Activated B cell treated with CpG ODN at 0.5 μM for 24 hours (primary cell): ENCODE measurements at regions of chr13 and their contacts with region 1.

Region 1: GRCh38 chr13:113296842-113297369 is at the start of gene LAMP1:
- DNase-seq: peak; percentile 100
- ATAC-seq: peak; percentile 80
- H3K4me3 Mint-ChIP-seq: peak within 1 kb of the TSS; percentile 94
- H3K27ac Mint-ChIP-seq: peak within 1 kb of the TSS; percentile 98
- H3K4me1 Mint-ChIP-seq: peaks cover 45% of the 10 kb centered on the region
- H3K27me3 Mint-ChIP-seq: peaks cover 16% of the 10 kb centered on the region
- CTCF ChIP-seq: no peak
- total RNA-seq, gene LAMP1: 83.7 and 86.2 TPM in 2 replicates

Region 2: GRCh38 chr13:112587212-112587763 is 709.6 kb before region 1 on chr13:
- CTCF ChIA-PET with region 1: no interaction called
- POLR2A ChIA-PET with region 1: no interaction called
- intact Hi-C with region 1: loop called (anchors 10 kb)
- DNase-seq: peak; percentile 58
- ATAC-seq: peak; percentile 59
- H3K4me3 Mint-ChIP-seq: peak overlapping the region; percentile 94
- H3K27ac Mint-ChIP-seq: peak overlapping the region; percentile 84
- H3K4me1 Mint-ChIP-seq: peaks cover 44% of the 10 kb centered on the region
- H3K27me3 Mint-ChIP-seq: peaks cover 4% of the 10 kb centered on the region
- CTCF ChIP-seq: no peak

Region 3: DNA sequence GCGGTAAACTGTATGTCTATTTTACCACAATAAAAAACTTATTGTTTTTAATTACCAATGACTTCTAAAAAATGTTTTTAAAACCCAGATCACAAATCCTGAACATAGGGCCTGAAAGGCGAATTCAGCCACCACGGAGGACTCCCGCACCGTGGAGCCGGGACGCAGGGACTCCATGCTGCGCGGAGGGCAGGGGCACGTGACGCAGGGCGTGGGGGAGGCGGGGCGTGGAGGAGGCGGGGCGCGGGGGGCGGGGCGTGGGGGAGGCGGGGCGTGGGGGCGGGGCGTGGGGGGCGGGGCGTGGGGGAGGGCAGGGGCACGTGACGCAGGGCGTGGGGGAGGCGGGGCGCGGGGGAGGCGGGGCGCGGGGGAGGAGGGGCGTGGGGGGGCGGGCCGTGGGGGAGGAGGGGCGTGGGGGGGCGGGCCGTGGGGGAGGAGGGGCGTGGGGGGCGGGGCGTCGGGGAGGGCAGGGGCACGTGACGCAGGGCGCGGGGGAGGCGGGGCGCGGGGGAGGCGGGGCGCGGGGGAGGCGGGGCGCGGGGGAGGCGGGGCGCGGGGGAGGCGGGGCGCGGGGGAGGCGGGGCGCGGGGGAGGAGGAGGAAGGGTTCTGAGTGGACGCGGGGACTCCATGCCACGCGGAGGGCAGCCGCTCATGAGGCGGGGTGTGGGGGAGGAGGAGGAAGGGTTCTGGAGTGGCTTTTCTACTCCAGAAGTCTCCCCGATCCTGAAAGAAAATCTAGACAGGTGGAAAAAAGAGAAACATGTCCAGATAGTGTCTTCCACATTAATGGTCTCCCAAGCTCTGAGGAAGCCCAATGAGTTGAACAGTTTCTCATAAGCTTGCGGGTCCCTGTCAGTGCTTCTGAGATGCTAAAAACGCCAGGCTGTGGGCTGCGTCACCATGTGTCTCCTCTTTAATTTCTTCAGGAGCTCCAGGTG is 142.8 kb before region 1 on chr13:
- CTCF ChIA-PET with region 1: no interaction called
- POLR2A ChIA-PET with region 1: no interaction called
- intact Hi-C with region 1: loop called (anchors 1 kb)
- DNase-seq: peak; percentile 50
- ATAC-seq: peak; percentile 85
- H3K4me3 Mint-ChIP-seq: peak overlapping the region; percentile 84
- H3K27ac Mint-ChIP-seq: peak overlapping the region; percentile 63
- H3K4me1 Mint-ChIP-seq: peaks cover 19% of the 10 kb centered on the region
- H3K27me3 Mint-ChIP-seq: peaks cover 12% of the 10 kb centered on the region
- CTCF ChIP-seq: no peak

Region 4: GRCh38 chr13:113245849-113246791 is 50.8 kb before region 1 on chr13:
- CTCF ChIA-PET with region 1: no interaction called
- POLR2A ChIA-PET with region 1: no interaction called
- intact Hi-C with region 1: loop called (anchors 1 kb)
- DNase-seq: no peak
- ATAC-seq: no peak
- H3K4me3 Mint-ChIP-seq: no peak overlapping the region
- H3K27ac Mint-ChIP-seq: no peak overlapping the region
- H3K4me1 Mint-ChIP-seq: no peaks in the 10 kb centered on the region
- H3K27me3 Mint-ChIP-seq: no peaks in the 10 kb centered on the region
- CTCF ChIP-seq: no peak

Region 5: GRCh38 chr13:113445791-113446487 is 149.0 kb after region 1 on chr13:
- CTCF ChIA-PET with region 1: no interaction called
- POLR2A ChIA-PET with region 1: interaction called, 4 read pairs
- intact Hi-C with region 1: loop called (anchors 1 kb)
- DNase-seq: peak; percentile 40
- ATAC-seq: peak; percentile 82
- H3K4me3 Mint-ChIP-seq: peak overlapping the region; percentile 38
- H3K27ac Mint-ChIP-seq: peak overlapping the region; percentile 59
- H3K4me1 Mint-ChIP-seq: peaks cover 30% of the 10 kb centered on the region
- H3K27me3 Mint-ChIP-seq: no peaks in the 10 kb centered on the region
- CTCF ChIP-seq: no peak

Region 6: DNA sequence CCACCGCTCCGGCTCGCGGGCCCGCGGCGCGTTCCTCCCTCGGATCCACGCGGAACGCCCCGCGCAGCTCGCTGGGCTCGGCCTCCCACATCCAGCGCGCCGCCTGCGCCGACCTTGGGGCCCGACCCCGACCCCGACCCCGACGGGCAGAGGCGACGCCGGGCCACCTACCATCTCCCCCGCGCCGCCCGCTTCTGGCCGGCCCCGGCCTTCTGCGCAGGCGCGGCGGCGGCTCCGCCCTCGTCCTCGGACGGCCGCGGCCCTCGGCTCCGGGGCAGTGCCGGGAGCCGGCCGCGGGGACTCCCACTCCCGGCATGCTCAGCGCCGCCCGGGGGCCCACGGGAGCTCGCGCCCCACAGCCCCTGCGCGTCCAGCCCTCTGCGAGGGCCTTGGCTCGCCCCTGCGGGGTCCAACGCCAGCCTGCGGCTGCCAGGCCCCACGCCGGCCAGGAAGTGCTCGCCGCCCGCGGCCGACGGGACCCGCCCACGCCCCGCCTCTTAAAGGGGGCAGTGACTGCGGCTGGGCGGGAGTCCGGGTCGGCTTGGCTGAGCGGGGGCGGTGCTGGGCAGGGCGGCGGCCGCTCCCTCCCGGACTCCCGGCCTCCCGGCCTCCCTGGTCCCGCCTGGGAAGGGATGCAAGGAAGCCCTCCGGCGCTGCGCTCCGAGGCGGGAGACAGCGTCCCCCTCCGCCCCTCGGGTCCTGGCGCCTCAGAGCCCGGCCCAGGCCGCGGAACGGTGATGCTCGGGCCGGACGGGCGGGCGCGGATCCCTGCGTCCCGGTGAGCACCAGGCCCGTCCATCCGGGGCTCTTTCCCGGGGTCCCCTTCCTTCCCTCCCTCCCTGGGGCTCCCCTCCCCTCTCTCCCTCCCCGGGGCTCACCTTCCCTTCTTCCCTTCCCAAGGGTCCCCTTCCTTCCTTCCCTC is 193.9 kb after region 1 on chr13 and contains the start of gene DCUN1D2:
- CTCF ChIA-PET with region 1: no interaction called
- POLR2A ChIA-PET with region 1: interaction called, 4 read pairs
- intact Hi-C with region 1: loop called (anchors 1 kb)
- DNase-seq: peak; percentile 91
- ATAC-seq: peak; percentile 90
- H3K4me3 Mint-ChIP-seq: peak within 1 kb of the TSS; percentile 90
- H3K27ac Mint-ChIP-seq: peak within 1 kb of the TSS; percentile 77
- H3K4me1 Mint-ChIP-seq: peaks cover 52% of the 10 kb centered on the region
- H3K27me3 Mint-ChIP-seq: no peaks in the 10 kb centered on the region
- CTCF ChIP-seq: no peak
- total RNA-seq, gene DCUN1D2: 19.8 and 26.2 TPM in 2 replicates